Cardiac septum (tissue), 1 donor: ENCODE measurements at regions of chr9 and their contacts with region 1.

Region 1: GRCh38 chr9:68500457-68501381 is 40.0 kb downstream of the TMEM252 start:
- DNase-seq: no peak

Region 2: GRCh38 chr9:68418259-68418845 is 82.4 kb before region 1 on chr9:
- intact Hi-C with region 1: loop called (anchors 2 kb)
- DNase-seq: no peak

Region 3: GRCh38 chr9:68437785-68438184 is 62.9 kb before region 1 on chr9:
- intact Hi-C with region 1: loop called (anchors 5 kb)
- DNase-seq: peak; percentile 82

Region 4: DNA sequence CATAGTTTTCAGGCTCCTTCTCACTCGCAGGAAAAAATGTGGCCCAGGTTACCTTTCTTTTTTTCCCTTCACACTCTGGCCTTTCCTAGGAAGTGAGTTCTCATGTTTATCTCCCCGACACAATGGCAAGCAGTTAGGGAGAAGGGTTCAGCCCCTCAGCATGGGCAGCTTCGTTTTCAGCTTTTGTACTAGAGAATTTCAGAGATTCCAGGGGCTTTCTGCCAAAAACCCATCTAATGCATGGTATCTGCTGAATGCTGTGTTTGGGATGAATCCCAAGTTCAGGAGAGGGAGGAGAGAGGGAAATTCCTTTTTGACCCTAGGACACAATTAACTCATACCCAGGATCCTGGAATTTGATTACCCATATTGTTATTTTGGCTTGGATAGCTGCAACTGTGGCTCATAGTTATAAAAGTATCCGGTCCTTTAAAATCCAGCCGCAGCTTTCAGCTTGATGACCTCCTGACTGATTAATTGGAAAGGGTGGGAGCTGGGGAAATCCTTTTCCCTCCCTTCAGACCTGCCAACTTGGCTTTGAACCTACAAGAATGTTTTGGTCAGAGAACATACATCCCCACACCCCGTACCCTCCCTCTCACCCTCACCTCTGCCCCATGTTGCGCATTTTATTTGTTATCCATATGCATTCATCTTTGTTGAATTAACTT is 38.5 kb before region 1 on chr9:
- intact Hi-C with region 1: loop called (anchors 5 kb)
- DNase-seq: no peak